Activated CD8-positive, alpha-beta T cell treated with anti-CD3 and anti-CD28 coated beads for 36 hours (primary cell): ENCODE measurements at regions of chr6 and their contacts with region 1.

Region 1: GRCh38 chr6:152982768-152983636 is at the start of gene FBXO5:
- DNase-seq: peak; percentile 98
- ATAC-seq: peak; percentile 92
- H3K4me3 Mint-ChIP-seq: peak within 1 kb of the TSS; percentile 85
- H3K27ac Mint-ChIP-seq: peak within 1 kb of the TSS; percentile 99
- H3K4me1 Mint-ChIP-seq: peaks cover 40% of the 10 kb centered on the region
- H3K27me3 Mint-ChIP-seq: no peaks in the 10 kb centered on the region
- CTCF ChIP-seq: no peak
- total RNA-seq, gene FBXO5: 40.9 to 44.0 TPM

Region 2: GRCh38 chr6:151451950-151452749 is 1530.9 kb before region 1 on chr6 and contains the start of gene RMND1:
- CTCF ChIA-PET with region 1: no interaction called
- POLR2A ChIA-PET with region 1: no interaction called
- intact Hi-C with region 1: loop called (anchors 5 kb)
- DNase-seq: peak; percentile 100
- ATAC-seq: peak; percentile 98
- H3K4me3 Mint-ChIP-seq: peak within 1 kb of the TSS; percentile 93
- H3K27ac Mint-ChIP-seq: peak within 1 kb of the TSS; percentile 85
- H3K4me1 Mint-ChIP-seq: peaks cover 31% of the 10 kb centered on the region
- H3K27me3 Mint-ChIP-seq: no peaks in the 10 kb centered on the region
- CTCF ChIP-seq: no peak
- total RNA-seq, gene RMND1: 19.0 to 19.7 TPM

Region 3: GRCh38 chr6:152922706-152923105 is 60.3 kb before region 1 on chr6:
- CTCF ChIA-PET with region 1: no interaction called
- POLR2A ChIA-PET with region 1: no interaction called
- intact Hi-C with region 1: no loop called
- DNase-seq: no peak
- ATAC-seq: no peak
- H3K4me3 Mint-ChIP-seq: no peak overlapping the region
- H3K27ac Mint-ChIP-seq: no peak overlapping the region
- H3K4me1 Mint-ChIP-seq: no peaks in the 10 kb centered on the region
- H3K27me3 Mint-ChIP-seq: peaks cover 12% of the 10 kb centered on the region
- CTCF ChIP-seq: no peak

Region 4: GRCh38 chr6:153002607-153003365 is 19.8 kb after region 1 on chr6 and contains the start of gene MTRF1L:
- CTCF ChIA-PET with region 1: interaction called, 3 read pairs
- POLR2A ChIA-PET with region 1: interaction called, 34 read pairs
- intact Hi-C with region 1: loop called (anchors 2 kb)
- DNase-seq: peak; percentile 96
- ATAC-seq: peak; percentile 92
- H3K4me3 Mint-ChIP-seq: peak within 1 kb of the TSS; percentile 87
- H3K27ac Mint-ChIP-seq: peak within 1 kb of the TSS; percentile 96
- H3K4me1 Mint-ChIP-seq: peaks cover 32% of the 10 kb centered on the region
- H3K27me3 Mint-ChIP-seq: no peaks in the 10 kb centered on the region
- CTCF ChIP-seq: no peak
- total RNA-seq, gene MTRF1L: 15.7 to 17.5 TPM

Region 5: DNA sequence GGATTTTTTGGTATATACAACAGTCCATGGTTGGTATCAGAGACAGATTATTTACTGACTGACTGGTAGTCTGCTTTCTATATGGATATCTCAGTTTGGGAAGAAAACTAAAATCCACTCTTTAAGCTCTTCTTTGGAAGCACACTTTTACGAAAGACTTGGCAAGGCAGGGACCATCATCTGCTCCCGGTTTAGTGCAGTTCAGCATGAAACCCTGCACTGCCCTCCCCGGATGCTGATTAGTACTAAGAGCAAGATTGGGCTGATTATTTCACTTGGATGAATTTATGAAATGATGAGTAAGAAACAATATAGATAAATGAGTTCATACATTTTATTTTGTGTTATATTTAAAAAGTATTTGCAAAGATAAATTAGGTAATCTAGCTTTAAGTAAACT is 91.8 kb after region 1 on chr6:
- CTCF ChIA-PET with region 1: no interaction called
- POLR2A ChIA-PET with region 1: no interaction called
- intact Hi-C with region 1: no loop called
- DNase-seq: no peak
- ATAC-seq: no peak
- H3K4me3 Mint-ChIP-seq: no peak overlapping the region
- H3K27ac Mint-ChIP-seq: no peak overlapping the region
- H3K4me1 Mint-ChIP-seq: no peaks in the 10 kb centered on the region
- H3K27me3 Mint-ChIP-seq: no peaks in the 10 kb centered on the region
- CTCF ChIP-seq: no peak

Region 6: GRCh38 chr6:153183925-153184324 is 200.9 kb after region 1 on chr6:
- CTCF ChIA-PET with region 1: no interaction called
- POLR2A ChIA-PET with region 1: no interaction called
- intact Hi-C with region 1: no loop called
- DNase-seq: no peak
- ATAC-seq: no peak
- H3K4me3 Mint-ChIP-seq: no peak overlapping the region
- H3K27ac Mint-ChIP-seq: no peak overlapping the region
- H3K4me1 Mint-ChIP-seq: no peaks in the 10 kb centered on the region
- H3K27me3 Mint-ChIP-seq: no peaks in the 10 kb centered on the region
- CTCF ChIP-seq: no peak